Vagina (tissue), 2 donors: ENCODE measurements at regions of chr6 and their contacts with region 1.

Region 1: GRCh38 chr6:142960098-142960497 is 15.1 kb upstream of the HIVEP2 start:
- DNase-seq: no peak
- H3K4me3 ChIP-seq: no peak overlapping the region
- H3K27ac ChIP-seq: no peak overlapping the region
- H3K4me1 ChIP-seq: no peaks in the 10 kb centered on the region
- H3K27me3 ChIP-seq: no peaks in the 10 kb centered on the region
- CTCF ChIP-seq: no peak
- POLR2A ChIP-seq: no peak

Region 2: GRCh38 chr6:142746524-142746923 is 213.6 kb before region 1 on chr6:
- intact Hi-C with region 1: loop called (anchors 10 kb)
- DNase-seq: no peak
- H3K4me3 ChIP-seq: no peak overlapping the region
- H3K27ac ChIP-seq: no peak overlapping the region
- H3K4me1 ChIP-seq: no peaks in the 10 kb centered on the region
- H3K27me3 ChIP-seq: no peaks in the 10 kb centered on the region
- CTCF ChIP-seq: no peak
- POLR2A ChIP-seq: no peak

Region 3: DNA sequence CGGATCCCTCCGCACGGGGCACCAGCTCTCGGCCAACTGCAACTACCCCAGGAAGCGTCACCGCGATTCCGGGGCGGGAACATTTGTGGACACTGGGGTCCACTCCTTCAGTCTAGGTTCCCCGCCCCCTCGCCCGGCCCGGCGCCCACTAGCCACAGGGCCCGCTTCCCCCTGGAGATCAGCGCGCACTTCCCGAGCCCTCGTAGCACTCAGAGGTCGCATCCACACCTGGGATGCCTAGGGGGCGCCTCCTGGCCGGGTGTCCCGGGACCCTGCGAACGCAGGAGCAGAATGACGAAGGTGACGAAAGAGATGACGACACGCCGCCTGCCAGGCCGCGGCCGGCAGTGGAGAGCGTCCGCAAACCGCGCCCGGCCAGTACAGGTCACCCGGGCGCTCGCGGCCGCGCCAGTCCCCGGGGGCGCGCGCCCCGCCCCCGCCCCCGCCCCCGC is 100.3 kb after region 1 on chr6:
- intact Hi-C with region 1: no loop called
- DNase-seq: no peak
- H3K4me3 ChIP-seq: peak overlapping the region; percentile 79 to 93
- H3K27ac ChIP-seq: peak overlapping the region; percentile 86
- H3K4me1 ChIP-seq: peaks cover 22% of the 10 kb centered on the region
- H3K27me3 ChIP-seq: no peaks in the 10 kb centered on the region
- CTCF ChIP-seq: no peak
- POLR2A ChIP-seq: no peak

Region 4: GRCh38 chr6:143689848-143690247 is 729.8 kb after region 1 on chr6:
- intact Hi-C with region 1: no loop called
- DNase-seq: no peak
- H3K4me3 ChIP-seq: no peak overlapping the region
- H3K27ac ChIP-seq: no peak overlapping the region
- H3K4me1 ChIP-seq: peaks cover 9% of the 10 kb centered on the region
- H3K27me3 ChIP-seq: no peaks in the 10 kb centered on the region
- CTCF ChIP-seq: no peak
- POLR2A ChIP-seq: no peak